CD4-positive, alpha-beta T cell (primary cell): ENCODE measurements at regions of chr2 and their contacts with region 1.

Region 1: GRCh38 chr2:71545572-71546274 is 92.4 kb downstream of the DYSF start:
- DNase-seq: peak in 13 of 14 experiments; percentile 5 to 70 (median 20)
- ATAC-seq: peak; percentile 55
- H3K4me3 ChIP-seq: peak overlapping the region; percentile 46
- H3K4me3 Mint-ChIP-seq: peak overlapping the region; percentile 47
- H3K27ac ChIP-seq: no peak overlapping the region
- H3K27ac Mint-ChIP-seq: no peak overlapping the region
- H3K4me1 ChIP-seq: peaks cover 12% of the 10 kb centered on the region
- H3K4me1 Mint-ChIP-seq: peaks cover 11% of the 10 kb centered on the region
- H3K27me3 ChIP-seq: peaks cover 0 to 16% of the 10 kb centered on the region in 2 experiments
- H3K27me3 Mint-ChIP-seq: peaks cover 23% of the 10 kb centered on the region
- CTCF ChIP-seq: peak; percentile 71

Region 2: GRCh38 chr2:72150157-72150865 is 604.6 kb after region 1 on chr2:
- CTCF ChIA-PET with region 1: no interaction called
- POLR2A ChIA-PET with region 1: no interaction called
- intact Hi-C with region 1: loop called (anchors 1 to 5 kb)
- DNase-seq: peak; percentile 21 to 64 (median 44)
- ATAC-seq: peak; percentile 55
- H3K4me3 ChIP-seq: peak overlapping the region; percentile 34
- H3K4me3 Mint-ChIP-seq: peak overlapping the region; percentile 83
- H3K27ac ChIP-seq: no peak overlapping the region
- H3K27ac Mint-ChIP-seq: no peak overlapping the region
- H3K4me1 ChIP-seq: peaks cover 45% of the 10 kb centered on the region
- H3K4me1 Mint-ChIP-seq: peaks cover 45% of the 10 kb centered on the region
- H3K27me3 ChIP-seq: peaks cover 54 to 70% of the 10 kb centered on the region in 2 experiments
- H3K27me3 Mint-ChIP-seq: peaks cover 84% of the 10 kb centered on the region
- CTCF ChIP-seq: peak; percentile 70

Region 3: GRCh38 chr2:72579591-72580180 is 1034.0 kb after region 1 on chr2:
- CTCF ChIA-PET with region 1: interaction called, 3 read pairs
- POLR2A ChIA-PET with region 1: no interaction called
- intact Hi-C with region 1: loop called (anchors 2 kb)
- DNase-seq: peak in 3 of 14 experiments; percentile 31 to 43 (median 40)
- ATAC-seq: no peak
- H3K4me3 ChIP-seq: no peak overlapping the region
- H3K4me3 Mint-ChIP-seq: no peak overlapping the region
- H3K27ac ChIP-seq: no peak overlapping the region
- H3K27ac Mint-ChIP-seq: no peak overlapping the region
- H3K4me1 ChIP-seq: no peaks in the 10 kb centered on the region
- H3K4me1 Mint-ChIP-seq: peaks cover 7% of the 10 kb centered on the region
- H3K27me3 ChIP-seq: no peaks in the 10 kb centered on the region
- H3K27me3 Mint-ChIP-seq: no peaks in the 10 kb centered on the region
- CTCF ChIP-seq: peak; percentile 70

Region 4: DNA sequence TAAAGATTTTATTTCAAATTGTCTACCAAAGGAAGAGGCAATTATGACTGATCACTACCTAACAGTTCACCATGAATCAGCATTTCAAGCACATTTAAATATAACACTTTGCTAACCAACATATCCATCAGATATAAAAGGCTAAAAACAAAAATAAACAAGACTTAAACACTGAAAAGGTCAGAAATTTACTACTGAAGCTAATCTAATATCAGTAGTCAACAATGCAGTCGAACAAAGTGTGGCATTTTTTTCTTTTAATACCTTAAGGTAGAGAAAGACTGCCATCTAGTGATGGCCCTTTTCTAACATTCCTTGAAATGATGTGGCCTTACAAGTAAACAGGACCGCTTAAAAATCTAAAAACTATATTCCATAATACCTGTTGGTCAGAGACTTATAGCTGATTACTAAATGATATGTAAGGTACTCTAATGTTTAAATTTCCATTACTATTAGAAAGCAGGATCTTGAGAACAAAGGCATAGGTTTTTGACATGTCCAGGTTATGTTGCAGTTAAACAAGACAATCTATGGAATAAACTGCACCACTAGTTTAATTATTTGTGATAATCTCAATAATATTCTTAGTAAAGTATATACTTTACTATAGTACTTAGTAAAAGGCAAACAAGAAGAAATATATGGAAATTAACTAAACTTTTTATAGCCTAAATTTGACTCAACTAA is 1200.1 kb after region 1 on chr2:
- CTCF ChIA-PET with region 1: no interaction called
- POLR2A ChIA-PET with region 1: no interaction called
- intact Hi-C with region 1: loop called in 1 of 2 experiments (anchors 5 kb)
- DNase-seq: peak in 3 of 14 experiments; percentile 38 to 56 (median 50)
- ATAC-seq: no peak
- H3K4me3 ChIP-seq: no peak overlapping the region
- H3K4me3 Mint-ChIP-seq: no peak overlapping the region
- H3K27ac ChIP-seq: no peak overlapping the region
- H3K27ac Mint-ChIP-seq: no peak overlapping the region
- H3K4me1 ChIP-seq: no peaks in the 10 kb centered on the region
- H3K4me1 Mint-ChIP-seq: no peaks in the 10 kb centered on the region
- H3K27me3 ChIP-seq: no peaks in the 10 kb centered on the region
- H3K27me3 Mint-ChIP-seq: no peaks in the 10 kb centered on the region
- CTCF ChIP-seq: peak; percentile 75

Region 5: GRCh38 chr2:72862239-72862988 is 1316.7 kb after region 1 on chr2:
- CTCF ChIA-PET with region 1: no interaction called
- POLR2A ChIA-PET with region 1: no interaction called
- intact Hi-C with region 1: loop called (anchors 5 to 10 kb)
- DNase-seq: peak; percentile 72 to 92 (median 82)
- ATAC-seq: peak; percentile 93
- H3K4me3 ChIP-seq: peak overlapping the region; percentile 8
- H3K4me3 Mint-ChIP-seq: no peak overlapping the region
- H3K27ac ChIP-seq: no peak overlapping the region
- H3K27ac Mint-ChIP-seq: no peak overlapping the region
- H3K4me1 ChIP-seq: peaks cover 10% of the 10 kb centered on the region
- H3K4me1 Mint-ChIP-seq: peaks cover 6% of the 10 kb centered on the region
- H3K27me3 ChIP-seq: peaks cover 22 to 39% of the 10 kb centered on the region in 2 experiments
- H3K27me3 Mint-ChIP-seq: peaks cover 71% of the 10 kb centered on the region
- CTCF ChIP-seq: peak; percentile 99